A549 (cell line): ENCODE measurements at regions of chr3 and their contacts with region 1.

Region 1: GRCh38 chr3:69051756-69052471 is at the start of gene TMF1:
- DNase-seq: peak; percentile 84 to 98
- ATAC-seq: peak; percentile 97 to 99
- H3K4me3 ChIP-seq: peak within 1 kb of the TSS; percentile 81
- H3K27ac ChIP-seq: peak within 1 kb of the TSS; percentile 81 to 89
- H3K4me1 ChIP-seq: peaks cover 3% of the 10 kb centered on the region; the same call in 2 of the 3 replicates
- CTCF ChIP-seq: no peak
- EP300 ChIP-seq: no peak
- POLR2A ChIP-seq: peak; percentile 62
- RAD21 ChIP-seq: no peak
- polyA plus RNA-seq, gene TMF1: 13.9 and 17.2 TPM in 2 replicates

Region 2: GRCh38 chr3:68953816-68954444 is 98.0 kb before region 1 on chr3:
- CTCF ChIA-PET with region 1: no interaction called
- POLR2A ChIA-PET with region 1: no interaction called
- DNase-seq: no peak
- ATAC-seq: no peak
- H3K4me3 ChIP-seq: no peak overlapping the region
- H3K27ac ChIP-seq: no peak overlapping the region
- H3K4me1 ChIP-seq: no peaks in the 10 kb centered on the region
- CTCF ChIP-seq: no peak
- EP300 ChIP-seq: no peak
- POLR2A ChIP-seq: no peak
- RAD21 ChIP-seq: no peak

Region 3: GRCh38 chr3:69020424-69020823 is 31.5 kb before region 1 on chr3:
- CTCF ChIA-PET with region 1: no interaction called
- POLR2A ChIA-PET with region 1: no interaction called
- DNase-seq: no peak
- ATAC-seq: no peak
- H3K4me3 ChIP-seq: no peak overlapping the region
- H3K27ac ChIP-seq: no peak overlapping the region
- H3K4me1 ChIP-seq: no peaks in the 10 kb centered on the region
- CTCF ChIP-seq: peak; percentile 37
- EP300 ChIP-seq: no peak
- POLR2A ChIP-seq: no peak
- RAD21 ChIP-seq: no peak

Region 4: GRCh38 chr3:69085833-69086722 is 34.2 kb after region 1 on chr3:
- CTCF ChIA-PET with region 1: no interaction called
- POLR2A ChIA-PET with region 1: interaction called, 11 read pairs
- DNase-seq: peak; percentile 36 to 84
- ATAC-seq: peak; percentile 74 to 80
- H3K4me3 ChIP-seq: peak overlapping the region; percentile 62
- H3K27ac ChIP-seq: peak overlapping the region; percentile 96
- H3K4me1 ChIP-seq: peaks cover 71% of the 10 kb centered on the region
- CTCF ChIP-seq: no peak
- EP300 ChIP-seq: no peak
- POLR2A ChIP-seq: no peak
- RAD21 ChIP-seq: no peak

Region 5: GRCh38 chr3:69096299-69096698 is 44.4 kb after region 1 on chr3:
- CTCF ChIA-PET with region 1: no interaction called
- POLR2A ChIA-PET with region 1: no interaction called
- DNase-seq: no peak
- ATAC-seq: no peak
- H3K4me3 ChIP-seq: no peak overlapping the region
- H3K27ac ChIP-seq: no peak overlapping the region
- H3K4me1 ChIP-seq: peaks cover 7% of the 10 kb centered on the region; the same call in 1 of the 3 replicates
- CTCF ChIP-seq: no peak
- EP300 ChIP-seq: no peak
- POLR2A ChIP-seq: no peak
- RAD21 ChIP-seq: no peak

Region 6: DNA sequence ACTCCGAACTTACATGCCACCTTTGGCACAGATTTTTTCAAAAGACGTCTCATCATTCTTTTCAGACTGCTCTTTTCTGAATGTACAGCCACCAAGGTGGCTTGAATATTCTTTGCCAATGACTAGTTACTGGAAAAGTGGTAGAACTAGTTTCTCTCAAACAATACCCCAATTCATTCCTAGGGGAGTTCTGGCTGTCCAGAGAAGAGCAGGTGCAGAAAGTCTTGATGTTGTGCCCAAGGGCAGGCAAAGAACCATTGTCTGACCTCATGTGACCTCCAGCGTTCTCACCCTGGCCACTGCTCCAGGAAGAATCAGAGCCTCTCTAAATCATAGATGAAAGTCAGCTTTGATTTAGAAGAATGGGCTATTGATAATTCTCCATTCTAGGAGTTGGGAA is 65.0 kb after region 1 on chr3:
- CTCF ChIA-PET with region 1: no interaction called
- POLR2A ChIA-PET with region 1: no interaction called
- DNase-seq: no peak
- ATAC-seq: no peak
- H3K4me3 ChIP-seq: no peak overlapping the region
- H3K27ac ChIP-seq: no peak overlapping the region
- H3K4me1 ChIP-seq: no peaks in the 10 kb centered on the region
- CTCF ChIP-seq: no peak
- EP300 ChIP-seq: no peak
- POLR2A ChIP-seq: no peak
- RAD21 ChIP-seq: no peak